ENCODE measurements at regions of chr14 and their contacts with region 1.

Region 1: DNA sequence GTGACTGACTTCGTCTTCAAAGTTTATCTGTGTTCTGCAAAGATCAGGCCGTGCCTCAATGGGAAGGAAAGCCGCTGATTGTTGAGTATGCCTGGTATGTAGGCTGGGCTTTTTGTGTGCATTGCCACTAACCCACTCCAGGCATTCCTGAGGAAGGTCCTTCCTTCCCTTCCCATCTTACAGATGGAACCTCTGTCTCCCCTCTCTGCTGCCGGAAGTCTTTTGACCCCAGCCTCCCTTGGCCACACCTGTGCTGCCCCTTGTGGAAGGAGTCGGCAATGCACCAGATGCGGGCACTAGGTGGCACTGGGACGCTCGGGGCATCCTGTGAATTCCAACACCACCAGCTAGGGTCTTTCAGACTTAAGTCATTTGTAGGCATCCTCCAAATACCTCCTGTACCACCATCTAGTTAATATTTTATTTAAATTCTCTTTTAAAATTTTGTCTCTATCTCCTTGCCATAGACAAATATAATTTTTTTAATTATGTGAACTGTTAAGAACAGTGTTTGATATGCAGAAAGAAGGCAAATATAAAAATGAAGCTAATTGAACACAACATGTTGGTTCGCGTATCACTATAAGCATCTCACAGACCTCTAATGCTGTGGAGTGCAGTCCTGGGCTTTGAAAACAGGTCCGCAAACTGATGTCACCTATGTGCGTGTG is 99.5 kb downstream of the RIN3 start:
- DNase-seq: peak; percentile 83
- H3K4me3 Mint-ChIP-seq: no peak overlapping the region
- H3K27ac Mint-ChIP-seq: no peak overlapping the region
- H3K4me1 Mint-ChIP-seq: peaks cover 42% of the 10 kb centered on the region
- H3K27me3 Mint-ChIP-seq: no peaks in the 10 kb centered on the region

Region 2: GRCh38 chr14:92596331-92596911 is 16.7 kb before region 1 on chr14:
- CTCF ChIA-PET with region 1: interaction called, 10 read pairs
- POLR2A ChIA-PET with region 1: no interaction called
- intact Hi-C with region 1: no loop called
- DNase-seq: no peak
- H3K4me3 Mint-ChIP-seq: no peak overlapping the region
- H3K27ac Mint-ChIP-seq: no peak overlapping the region
- H3K4me1 Mint-ChIP-seq: peaks cover 2% of the 10 kb centered on the region
- H3K27me3 Mint-ChIP-seq: no peaks in the 10 kb centered on the region

Region 3: DNA sequence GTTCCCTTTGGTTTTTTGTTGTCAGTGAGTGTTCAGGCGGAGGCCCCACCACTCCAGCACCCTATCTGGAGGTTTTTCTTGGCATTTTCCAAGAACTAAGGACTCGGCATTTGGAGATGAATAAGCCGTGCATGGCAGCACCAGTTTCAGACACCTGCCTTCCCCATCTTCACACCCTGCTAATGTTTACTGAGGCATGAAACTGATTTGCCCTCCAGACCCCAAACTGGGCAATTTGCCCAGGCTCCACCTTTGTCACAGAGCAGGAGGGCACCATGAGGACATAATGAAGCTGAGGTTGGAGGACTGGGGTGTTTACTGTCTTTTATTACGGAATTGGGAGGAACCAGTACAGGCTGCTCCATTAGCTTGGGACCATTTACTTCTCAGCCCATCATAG is 21.9 kb after region 1 on chr14:
- CTCF ChIA-PET with region 1: interaction called, 11 read pairs
- POLR2A ChIA-PET with region 1: no interaction called
- intact Hi-C with region 1: no loop called
- DNase-seq: no peak
- H3K4me3 Mint-ChIP-seq: no peak overlapping the region
- H3K27ac Mint-ChIP-seq: no peak overlapping the region
- H3K4me1 Mint-ChIP-seq: peaks cover 5% of the 10 kb centered on the region
- H3K27me3 Mint-ChIP-seq: no peaks in the 10 kb centered on the region

Region 4: GRCh38 chr14:92670160-92670559 is 57.0 kb after region 1 on chr14:
- CTCF ChIA-PET with region 1: interaction called, 11 read pairs
- POLR2A ChIA-PET with region 1: no interaction called
- intact Hi-C with region 1: no loop called
- DNase-seq: no peak
- H3K4me3 Mint-ChIP-seq: no peak overlapping the region
- H3K27ac Mint-ChIP-seq: peak overlapping the region; percentile 60
- H3K4me1 Mint-ChIP-seq: peaks cover 71% of the 10 kb centered on the region
- H3K27me3 Mint-ChIP-seq: no peaks in the 10 kb centered on the region

Region 5: GRCh38 chr14:92680781-92681650 is 67.9 kb after region 1 on chr14:
- CTCF ChIA-PET with region 1: interaction called, 37 read pairs
- POLR2A ChIA-PET with region 1: no interaction called
- intact Hi-C with region 1: loop called (anchors 1 kb)
- DNase-seq: peak; percentile 85
- H3K4me3 Mint-ChIP-seq: no peak overlapping the region
- H3K27ac Mint-ChIP-seq: peak overlapping the region; percentile 45
- H3K4me1 Mint-ChIP-seq: peaks cover 32% of the 10 kb centered on the region
- H3K27me3 Mint-ChIP-seq: no peaks in the 10 kb centered on the region